ENCODE measurements at regions of chr2 and their contacts with region 1.

Region 1: GRCh38 chr2:202870431-202871299 is 901 bp downstream of the ICA1L start:
- DNase-seq: peak; percentile 83
- ATAC-seq: peak; percentile 78
- H3K4me3 Mint-ChIP-seq: peak overlapping the region; percentile 90
- H3K27ac Mint-ChIP-seq: peak overlapping the region; percentile 80
- H3K4me1 Mint-ChIP-seq: peaks cover 11% of the 10 kb centered on the region
- H3K27me3 Mint-ChIP-seq: no peaks in the 10 kb centered on the region

Region 2: DNA sequence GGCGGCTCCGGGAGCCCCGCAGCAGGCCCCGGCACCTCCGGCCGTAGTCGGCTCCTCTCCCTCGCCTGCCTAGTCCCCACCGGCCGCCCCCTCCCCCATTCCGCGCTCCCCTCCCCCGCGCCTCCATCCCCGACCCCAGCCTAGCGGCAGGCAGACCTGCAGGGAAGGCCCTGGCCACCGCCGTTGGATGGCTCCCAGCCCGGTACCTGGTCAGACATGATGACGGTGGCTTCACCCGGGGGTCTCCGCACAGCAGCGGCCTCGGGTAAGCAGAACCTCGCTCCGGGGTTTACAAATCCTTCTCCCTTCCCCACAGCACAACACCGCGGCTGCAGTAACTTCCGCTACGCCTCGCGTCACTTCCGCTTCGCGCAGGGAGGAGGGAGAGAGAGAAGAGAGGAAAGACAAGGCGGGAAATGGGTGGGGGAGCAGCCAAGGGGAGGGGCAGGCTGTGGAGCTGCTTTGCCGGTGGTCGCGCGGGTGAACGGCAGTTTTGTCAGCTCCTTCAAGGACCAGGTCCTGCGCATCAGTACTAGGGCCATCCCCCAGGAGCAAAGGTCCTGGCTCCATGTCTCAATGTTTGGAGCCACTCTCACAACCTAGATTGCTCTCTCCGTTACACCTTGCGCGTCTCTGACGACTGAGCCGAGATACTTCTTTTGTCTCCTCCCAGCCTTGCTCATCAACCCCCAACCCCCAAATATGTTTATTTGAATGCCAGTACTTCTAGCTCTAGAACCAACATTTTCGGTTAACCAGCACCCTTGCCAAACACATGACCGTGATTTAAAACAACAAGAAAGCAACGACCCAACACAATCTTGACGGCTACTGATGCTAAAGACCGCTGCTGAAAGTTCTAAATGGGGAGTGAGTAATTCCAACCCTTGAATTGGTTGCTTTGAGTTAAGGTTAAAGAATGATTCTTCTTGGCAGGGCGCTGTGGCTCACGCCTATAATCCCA is 632.1 kb before region 1 on chr2 and contains the start of gene SUMO1:
- CTCF ChIA-PET with region 1: no interaction called
- POLR2A ChIA-PET with region 1: no interaction called
- intact Hi-C with region 1: loop called in 1 of 2 experiments (anchors 2 kb)
- DNase-seq: peak; percentile 95
- ATAC-seq: peak; percentile 93
- H3K4me3 Mint-ChIP-seq: peak within 1 kb of the TSS; percentile 98
- H3K27ac Mint-ChIP-seq: peak within 1 kb of the TSS; percentile 97
- H3K4me1 Mint-ChIP-seq: peaks cover 28% of the 10 kb centered on the region
- H3K27me3 Mint-ChIP-seq: no peaks in the 10 kb centered on the region
- total RNA-seq, gene SUMO1: 132 to 164 TPM

Region 3: GRCh38 chr2:202577250-202578183 is 293.1 kb before region 1 on chr2:
- CTCF ChIA-PET with region 1: interaction called, 5 read pairs
- POLR2A ChIA-PET with region 1: interaction called, 3 read pairs
- intact Hi-C with region 1: loop called (anchors 1 kb)
- DNase-seq: no peak
- ATAC-seq: no peak
- H3K4me3 Mint-ChIP-seq: no peak overlapping the region
- H3K27ac Mint-ChIP-seq: no peak overlapping the region
- H3K4me1 Mint-ChIP-seq: peaks cover 1% of the 10 kb centered on the region
- H3K27me3 Mint-ChIP-seq: no peaks in the 10 kb centered on the region

Region 4: DNA sequence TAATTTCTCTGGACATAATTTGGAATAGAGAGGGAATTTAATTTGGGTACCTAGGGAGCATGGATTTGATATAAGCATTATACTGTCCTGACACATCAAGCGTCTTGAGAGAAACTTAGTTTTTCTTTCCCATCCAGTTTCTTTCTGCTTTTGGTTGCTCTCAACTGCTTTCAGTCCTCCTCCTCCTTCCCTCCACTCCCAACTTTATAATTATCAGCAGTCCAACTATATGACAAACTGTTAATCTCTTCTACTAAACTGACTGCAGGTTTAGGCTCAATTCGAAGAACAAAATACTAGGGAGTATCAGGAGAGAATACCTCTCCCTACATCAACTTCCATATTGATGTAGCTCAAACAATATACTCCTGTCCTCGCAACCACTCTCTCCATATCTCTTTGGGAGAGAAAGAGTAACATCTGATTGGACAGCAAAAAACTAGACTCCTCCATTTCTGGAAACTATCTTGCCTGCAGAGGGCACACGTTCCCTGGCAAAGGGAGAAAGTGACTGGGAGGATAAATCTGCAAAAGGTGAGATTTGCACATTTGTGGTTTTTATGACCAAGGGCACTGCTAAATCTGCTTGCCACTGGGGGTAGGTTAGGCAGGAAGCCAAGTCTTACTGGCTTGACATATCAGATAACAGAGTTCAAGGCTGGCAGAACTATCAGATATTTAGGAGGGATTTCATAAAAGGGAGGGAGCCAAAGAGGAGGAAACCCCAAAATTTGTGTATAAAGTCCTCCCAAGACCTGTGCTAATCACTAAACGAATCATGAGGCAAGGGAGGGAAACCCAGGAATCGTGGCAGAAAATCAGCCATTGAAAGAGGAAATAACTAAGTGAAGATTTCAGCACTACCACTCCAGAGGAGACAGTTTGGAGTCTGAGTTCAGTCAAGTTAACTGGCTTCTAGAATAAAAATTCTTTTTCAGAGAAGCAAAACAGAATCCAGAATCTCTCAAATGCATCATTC is 39.1 kb before region 1 on chr2:
- CTCF ChIA-PET with region 1: interaction called, 7 read pairs
- POLR2A ChIA-PET with region 1: no interaction called
- intact Hi-C with region 1: loop called in 1 of 2 experiments (anchors 1 kb)
- DNase-seq: peak; percentile 73
- ATAC-seq: peak; percentile 97
- H3K4me3 Mint-ChIP-seq: no peak overlapping the region
- H3K27ac Mint-ChIP-seq: no peak overlapping the region
- H3K4me1 Mint-ChIP-seq: peaks cover 10% of the 10 kb centered on the region
- H3K27me3 Mint-ChIP-seq: no peaks in the 10 kb centered on the region

Region 5: DNA sequence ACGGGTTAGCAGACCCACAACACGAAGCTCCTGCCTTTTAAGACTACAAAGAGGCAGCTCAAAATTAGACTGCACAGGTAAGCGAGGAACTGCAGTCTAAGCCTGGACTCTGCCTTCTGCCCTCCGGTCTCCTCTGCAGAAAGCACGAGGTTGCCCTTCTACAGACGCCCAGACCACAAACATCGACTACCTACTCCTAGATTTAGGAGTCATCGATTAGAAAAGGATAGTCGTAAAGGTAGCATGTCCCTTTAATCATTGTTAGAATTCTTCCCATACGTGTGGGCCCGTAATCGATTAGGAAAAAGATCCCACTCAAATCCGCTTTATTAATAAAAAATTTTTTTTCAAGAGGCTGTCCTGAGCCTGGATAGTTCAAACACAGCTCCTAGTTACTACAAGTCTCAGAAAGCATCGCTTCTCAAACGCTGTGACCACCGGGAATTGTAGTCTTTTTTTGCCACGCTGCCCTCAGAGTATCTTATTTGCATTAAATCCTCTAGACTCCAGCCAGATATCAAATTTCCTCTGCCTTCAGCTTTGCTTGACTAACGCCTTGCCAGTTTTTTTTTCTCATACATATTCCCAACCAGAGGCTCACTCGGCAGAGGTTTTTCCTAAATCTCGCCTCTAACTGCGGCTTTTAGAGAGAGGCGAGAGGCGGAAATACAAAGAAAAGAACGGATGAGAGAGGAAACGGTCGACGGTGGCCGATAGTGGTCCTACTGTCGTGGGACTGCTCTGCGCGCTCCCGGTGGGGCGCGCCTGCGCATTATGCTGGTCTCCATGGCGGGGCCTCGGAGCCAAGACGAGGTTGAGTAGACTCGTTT is 41.1 kb after region 1 on chr2 and contains the starts of genes CARF and WDR12:
- CTCF ChIA-PET with region 1: interaction called, 9 read pairs
- POLR2A ChIA-PET with region 1: interaction called, 3 read pairs
- intact Hi-C with region 1: loop called in 1 of 2 experiments (anchors 1 kb)
- DNase-seq: peak; percentile 96
- ATAC-seq: peak; percentile 84
- H3K4me3 Mint-ChIP-seq: peak within 1 kb of the TSS; percentile 84
- H3K27ac Mint-ChIP-seq: peak within 1 kb of the TSS; percentile 95
- H3K4me1 Mint-ChIP-seq: peaks cover 30% of the 10 kb centered on the region
- H3K27me3 Mint-ChIP-seq: no peaks in the 10 kb centered on the region
- total RNA-seq, gene CARF: 6.2 to 9.0 TPM
- total RNA-seq, gene WDR12: 92.5 to 129 TPM